GM12878 (cell line): ENCODE measurements at regions of chr12 and their contacts with region 1.

Region 1: GRCh38 chr12:4251216-4251891 is 22.2 kb upstream of the CCND2 start:
- DNase-seq: no peak
- ATAC-seq: peak; percentile 70
- H3K4me3 ChIP-seq: no peak overlapping the region
- H3K27ac ChIP-seq: no peak overlapping the region
- H3K4me1 ChIP-seq: peaks cover 4% of the 10 kb centered on the region
- H3K27me3 ChIP-seq: no peaks in the 10 kb centered on the region; a peak in 1 of 4 replicates
- CTCF ChIP-seq: peak in 1 of 3 experiments; percentile 19; a peak in 1 of 6 replicates
- EP300 ChIP-seq: no peak
- POLR2A ChIP-seq: no peak
- RAD21 ChIP-seq: peak; percentile 23; the same call in 1 of the 2 replicates

Region 2: GRCh38 chr12:4261655-4262054 is 10.3 kb after region 1 on chr12:
- CTCF ChIA-PET with region 1: interaction called, 7 read pairs
- POLR2A ChIA-PET with region 1: interaction called, 11 read pairs
- RAD21 ChIA-PET with region 1: interaction called, 11 read pairs
- SMC1A ChIA-PET with region 1: interaction called, 12 read pairs
- in situ Hi-C with region 1: no loop called
- intact Hi-C with region 1: no loop called
- DNase-seq: peak; percentile 64
- ATAC-seq: peak; percentile 96
- H3K4me3 ChIP-seq: no peak overlapping the region
- H3K27ac ChIP-seq: peak overlapping the region; percentile 80
- H3K4me1 ChIP-seq: peaks cover 15% of the 10 kb centered on the region
- H3K27me3 ChIP-seq: no peaks in the 10 kb centered on the region
- CTCF ChIP-seq: no peak
- EP300 ChIP-seq: no peak
- POLR2A ChIP-seq: no peak
- RAD21 ChIP-seq: no peak